Calu3 (cell line): ENCODE measurements at regions of chr9 and their contacts with region 1.

Region 1: DNA sequence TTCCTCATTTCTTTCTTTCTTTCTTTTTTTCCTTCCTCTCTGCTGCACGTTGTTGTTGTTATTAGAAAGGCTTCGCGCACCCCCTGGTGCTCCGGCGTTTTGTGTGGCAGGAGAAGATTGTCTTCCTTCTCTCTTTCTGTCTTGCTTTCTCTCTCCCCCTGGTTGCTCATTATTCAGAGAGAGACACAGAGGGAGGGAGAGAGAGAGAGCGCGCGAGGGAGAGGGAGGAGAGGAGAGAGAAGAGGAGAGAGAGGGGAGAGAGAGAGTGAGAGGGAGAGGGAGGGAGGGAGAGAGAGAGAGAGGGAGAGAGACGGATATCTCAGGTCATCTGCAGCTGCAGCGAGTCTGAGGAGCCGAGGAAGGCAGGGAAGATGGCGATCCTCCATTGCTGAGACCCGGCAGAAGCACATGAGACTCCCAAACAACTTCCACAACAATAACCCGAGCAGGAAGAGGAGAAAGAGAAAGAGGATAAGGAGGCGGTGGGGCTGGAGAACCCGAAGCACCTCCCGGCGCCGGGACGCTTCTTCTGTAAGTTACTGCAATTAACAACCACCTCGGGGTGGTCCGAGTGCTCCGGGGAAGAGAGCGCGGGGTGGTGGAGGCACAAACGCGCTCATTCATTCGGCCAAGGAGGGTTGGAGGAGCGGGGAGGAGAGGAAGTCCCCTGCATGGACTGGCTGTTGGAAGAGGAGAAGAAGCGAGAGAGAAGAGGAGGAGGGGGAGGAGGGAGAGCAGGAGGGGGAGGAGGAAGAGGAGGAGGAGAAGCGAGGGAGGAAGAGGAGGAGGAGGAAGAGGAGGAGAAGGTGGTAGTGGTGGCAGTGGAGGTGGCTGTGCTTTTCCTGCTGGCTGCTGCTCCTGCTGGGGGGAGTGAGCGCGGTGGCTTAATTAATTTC is at the start of gene ZNF462:
- DNase-seq: peak; percentile 21
- H3K4me3 Mint-ChIP-seq: peak within 1 kb of the TSS; percentile 87
- H3K27ac Mint-ChIP-seq: peak within 1 kb of the TSS; percentile 83
- H3K4me1 Mint-ChIP-seq: peaks cover 29% of the 10 kb centered on the region
- H3K27me3 Mint-ChIP-seq: no peaks in the 10 kb centered on the region
- CTCF ChIP-seq: no peak
- total RNA-seq, gene ZNF462: 37.3 and 48.0 TPM in 2 replicates

Region 2: DNA sequence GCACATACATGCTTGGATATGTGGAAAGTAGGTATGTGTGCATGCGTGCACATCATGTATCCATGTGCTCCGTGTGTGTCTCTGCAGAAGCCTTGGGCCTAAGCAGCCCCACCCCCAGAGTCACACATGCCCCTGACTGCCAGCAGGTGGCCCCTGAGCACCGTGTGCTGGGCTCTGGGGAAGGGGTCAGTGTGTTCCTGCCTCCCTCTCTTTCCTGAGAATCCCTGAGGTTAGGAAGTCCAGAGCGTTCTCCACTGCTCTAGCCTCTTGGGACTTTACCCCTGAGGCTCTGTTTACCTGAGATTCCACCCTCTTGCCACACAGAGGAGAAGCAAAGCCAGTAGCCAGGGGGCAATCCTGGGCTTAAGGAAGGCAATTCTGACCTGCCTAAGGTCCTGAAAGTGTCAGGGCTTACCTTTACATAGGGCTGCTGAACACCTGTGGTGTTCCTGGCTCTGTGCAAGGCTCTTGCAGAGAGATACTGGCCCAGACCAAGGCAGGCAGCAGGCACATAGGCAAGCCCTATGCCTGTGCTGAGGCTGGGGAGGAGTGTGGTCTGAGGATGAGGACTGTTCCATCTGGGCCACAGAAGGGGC is 961.5 kb before region 1 on chr9:
- CTCF ChIA-PET with region 1: no interaction called
- intact Hi-C with region 1: loop called (anchors 5 kb)
- DNase-seq: peak; percentile 48
- H3K4me3 Mint-ChIP-seq: no peak overlapping the region
- H3K27ac Mint-ChIP-seq: no peak overlapping the region
- H3K4me1 Mint-ChIP-seq: no peaks in the 10 kb centered on the region
- H3K27me3 Mint-ChIP-seq: no peaks in the 10 kb centered on the region
- CTCF ChIP-seq: peak; percentile 62

Region 3: DNA sequence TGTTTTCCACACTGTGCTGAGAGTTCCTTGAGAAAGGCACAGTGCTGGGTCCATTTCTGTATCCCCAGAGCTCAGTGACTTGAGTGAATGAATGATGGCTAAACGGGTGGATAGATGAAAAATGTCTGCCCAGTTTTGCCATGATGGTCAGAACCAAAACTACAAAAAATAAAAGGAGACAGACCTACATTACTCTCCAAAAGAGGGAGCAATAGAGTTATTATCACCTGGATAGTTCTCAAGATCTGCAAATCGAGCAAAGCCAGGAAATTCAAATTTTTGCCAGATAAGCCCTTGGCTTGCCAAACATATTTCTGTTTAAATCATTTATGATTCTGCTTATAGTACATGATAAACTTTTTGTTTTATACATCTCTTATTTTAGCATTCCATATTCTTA is 214.3 kb before region 1 on chr9:
- CTCF ChIA-PET with region 1: no interaction called
- intact Hi-C with region 1: loop called (anchors 2 kb)
- DNase-seq: no peak
- H3K4me3 Mint-ChIP-seq: no peak overlapping the region
- H3K27ac Mint-ChIP-seq: no peak overlapping the region
- H3K4me1 Mint-ChIP-seq: no peaks in the 10 kb centered on the region
- H3K27me3 Mint-ChIP-seq: no peaks in the 10 kb centered on the region
- CTCF ChIP-seq: no peak

Region 4: DNA sequence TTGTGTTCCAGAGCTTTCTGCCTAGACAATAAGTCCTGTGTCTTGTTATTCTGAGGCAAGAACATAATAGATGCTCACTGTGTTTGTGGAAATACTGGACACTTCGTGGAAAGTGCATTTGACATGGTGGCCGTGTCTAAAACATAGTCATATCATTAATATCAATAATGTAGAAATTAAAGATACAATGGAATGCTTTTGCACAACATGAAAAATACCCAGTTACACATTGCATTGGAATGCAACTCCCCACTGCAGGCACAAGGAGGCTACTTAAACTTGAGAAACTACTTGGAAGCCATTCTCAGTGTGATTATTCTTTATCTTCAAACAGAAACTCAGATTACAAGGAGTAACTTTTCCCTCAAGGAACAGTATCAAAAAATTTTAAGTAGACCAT is 145.4 kb before region 1 on chr9:
- CTCF ChIA-PET with region 1: no interaction called
- intact Hi-C with region 1: loop called (anchors 5 kb)
- DNase-seq: peak; percentile 20
- H3K4me3 Mint-ChIP-seq: no peak overlapping the region
- H3K27ac Mint-ChIP-seq: peak overlapping the region; percentile 81
- H3K4me1 Mint-ChIP-seq: peaks cover 22% of the 10 kb centered on the region
- H3K27me3 Mint-ChIP-seq: no peaks in the 10 kb centered on the region
- CTCF ChIP-seq: no peak

Region 5: GRCh38 chr9:106921341-106921899 is 58.3 kb after region 1 on chr9:
- CTCF ChIA-PET with region 1: interaction called, 11 read pairs
- intact Hi-C with region 1: loop called (anchors 2 kb)
- DNase-seq: peak; percentile 36
- H3K4me3 Mint-ChIP-seq: peak overlapping the region; percentile 66
- H3K27ac Mint-ChIP-seq: peak overlapping the region; percentile 89
- H3K4me1 Mint-ChIP-seq: peaks cover 44% of the 10 kb centered on the region
- H3K27me3 Mint-ChIP-seq: no peaks in the 10 kb centered on the region
- CTCF ChIP-seq: no peak

Region 6: GRCh38 chr9:106981396-106982287 is 118.6 kb after region 1 on chr9:
- CTCF ChIA-PET with region 1: no interaction called
- intact Hi-C with region 1: no loop called
- DNase-seq: no peak
- H3K4me3 Mint-ChIP-seq: no peak overlapping the region
- H3K27ac Mint-ChIP-seq: no peak overlapping the region
- H3K4me1 Mint-ChIP-seq: no peaks in the 10 kb centered on the region
- H3K27me3 Mint-ChIP-seq: no peaks in the 10 kb centered on the region
- CTCF ChIP-seq: no peak

Region 7: DNA sequence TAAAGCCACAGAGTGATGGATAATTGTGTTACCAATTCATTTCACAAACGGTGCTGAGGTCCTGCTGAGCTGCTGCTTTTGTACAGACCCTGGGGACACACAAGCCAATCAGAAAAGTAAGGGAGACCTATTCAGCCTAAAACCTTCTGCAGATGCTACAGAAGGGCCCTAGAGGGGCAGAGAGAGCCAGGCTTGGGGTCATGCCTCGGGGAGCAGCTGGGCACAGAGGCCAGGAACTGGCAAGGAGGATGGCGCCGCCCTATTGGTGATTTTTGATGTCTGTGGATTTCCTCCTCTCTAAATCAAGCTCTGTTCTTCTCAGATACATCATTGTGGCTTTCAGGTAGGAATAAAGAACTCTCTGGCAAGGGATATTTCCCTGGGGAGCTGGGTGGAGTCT is 181.8 kb after region 1 on chr9:
- CTCF ChIA-PET with region 1: no interaction called
- intact Hi-C with region 1: loop called (anchors 10 kb)
- DNase-seq: peak; percentile 43
- H3K4me3 Mint-ChIP-seq: no peak overlapping the region
- H3K27ac Mint-ChIP-seq: no peak overlapping the region
- H3K4me1 Mint-ChIP-seq: peaks cover 7% of the 10 kb centered on the region
- H3K27me3 Mint-ChIP-seq: no peaks in the 10 kb centered on the region
- CTCF ChIP-seq: no peak